AG04449 (cell line): ENCODE measurements at regions of chr12 and their contacts with region 1.

Region 1: DNA sequence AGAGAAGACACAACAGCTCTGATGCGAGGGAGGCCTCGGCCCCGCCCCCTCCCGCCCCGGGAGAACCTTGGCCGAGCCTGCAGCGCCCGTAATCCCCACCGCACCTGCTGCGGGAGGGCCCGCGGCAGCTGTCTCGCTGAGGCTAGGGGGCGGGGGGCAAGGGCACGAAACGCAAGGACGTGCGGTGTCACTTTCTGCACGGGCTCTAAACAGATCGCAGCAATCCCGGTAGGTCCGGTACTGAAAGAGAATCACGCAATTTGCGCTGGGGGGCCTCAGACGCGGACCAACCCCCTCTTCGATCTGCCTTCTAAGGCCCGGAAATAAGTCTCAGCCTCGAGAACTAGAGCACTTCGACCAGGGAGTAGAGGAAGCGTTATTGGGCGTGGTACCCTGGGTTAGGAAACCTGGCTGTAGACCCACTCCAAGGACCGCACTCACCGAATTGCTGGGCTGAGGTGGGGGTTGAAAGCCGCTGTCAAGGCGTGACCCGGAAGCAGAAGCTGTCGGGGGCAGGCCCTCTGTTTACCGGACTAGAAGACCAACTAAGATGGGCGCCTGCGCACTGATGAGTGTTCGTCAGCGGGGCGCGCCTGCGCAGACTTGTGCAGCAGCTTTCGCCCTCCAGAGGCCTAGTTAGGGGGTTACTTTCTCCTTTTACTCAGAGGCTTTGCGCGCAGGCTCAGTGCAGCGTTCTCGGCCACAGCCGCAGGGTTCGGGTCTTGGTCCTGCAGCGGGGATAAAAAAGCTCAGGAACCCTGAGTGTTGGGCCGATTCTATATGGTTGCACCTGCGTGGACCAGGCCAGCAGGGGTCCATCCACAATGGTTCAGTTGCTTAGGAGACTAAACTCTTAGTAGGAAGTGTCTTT is at the start of gene ASB8:
- DNase-seq: peak; percentile 83
- H3K4me3 ChIP-seq: peak within 1 kb of the TSS; percentile 93
- CTCF ChIP-seq: peak; percentile 38

Region 2: DNA sequence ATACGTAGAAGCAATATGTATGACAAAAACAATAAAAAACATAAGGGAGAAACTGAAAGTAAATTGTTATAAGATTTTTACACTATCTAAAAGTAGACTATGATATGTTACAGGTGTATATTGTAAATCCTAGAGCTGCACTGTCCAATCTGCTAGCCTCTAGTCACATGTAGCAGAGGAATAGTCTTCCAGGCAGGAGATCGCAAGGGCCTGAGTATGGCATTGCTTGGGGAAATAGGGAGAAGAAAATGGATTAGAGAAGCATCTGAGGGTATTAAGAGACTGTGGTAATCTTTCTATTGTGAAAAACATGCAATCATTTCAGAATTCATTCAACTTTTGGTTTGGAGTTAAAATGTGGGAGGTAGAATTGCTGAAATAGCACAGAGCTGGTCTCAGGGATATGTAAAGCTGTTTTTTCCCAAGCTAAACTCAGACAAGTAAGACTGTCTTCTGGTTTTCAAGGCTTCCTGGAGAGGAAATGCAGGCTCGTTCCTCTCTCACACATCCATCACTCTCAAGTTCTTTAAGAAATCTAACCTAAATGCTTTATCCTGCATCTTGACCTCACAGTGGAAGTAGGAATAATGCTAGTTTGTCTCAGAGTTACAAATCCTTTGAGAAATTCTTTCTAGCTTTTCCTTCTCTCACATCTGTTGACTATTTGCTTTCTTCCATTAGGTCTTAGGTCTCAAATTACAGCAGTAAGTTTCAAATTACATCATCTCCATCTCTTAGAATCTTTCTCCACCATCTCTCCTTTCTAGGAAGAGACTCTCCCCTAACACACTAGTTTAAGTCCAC is 18.6 kb after region 1 on chr12:
- CTCF ChIA-PET with region 1: interaction called, 14 read pairs
- POLR2A ChIA-PET with region 1: no interaction called
- DNase-seq: no peak
- H3K4me3 ChIP-seq: no peak overlapping the region
- CTCF ChIP-seq: no peak